Mammary epithelial cell (primary cell): ENCODE measurements at regions of chr12 and their contacts with region 1.

Region 1: DNA sequence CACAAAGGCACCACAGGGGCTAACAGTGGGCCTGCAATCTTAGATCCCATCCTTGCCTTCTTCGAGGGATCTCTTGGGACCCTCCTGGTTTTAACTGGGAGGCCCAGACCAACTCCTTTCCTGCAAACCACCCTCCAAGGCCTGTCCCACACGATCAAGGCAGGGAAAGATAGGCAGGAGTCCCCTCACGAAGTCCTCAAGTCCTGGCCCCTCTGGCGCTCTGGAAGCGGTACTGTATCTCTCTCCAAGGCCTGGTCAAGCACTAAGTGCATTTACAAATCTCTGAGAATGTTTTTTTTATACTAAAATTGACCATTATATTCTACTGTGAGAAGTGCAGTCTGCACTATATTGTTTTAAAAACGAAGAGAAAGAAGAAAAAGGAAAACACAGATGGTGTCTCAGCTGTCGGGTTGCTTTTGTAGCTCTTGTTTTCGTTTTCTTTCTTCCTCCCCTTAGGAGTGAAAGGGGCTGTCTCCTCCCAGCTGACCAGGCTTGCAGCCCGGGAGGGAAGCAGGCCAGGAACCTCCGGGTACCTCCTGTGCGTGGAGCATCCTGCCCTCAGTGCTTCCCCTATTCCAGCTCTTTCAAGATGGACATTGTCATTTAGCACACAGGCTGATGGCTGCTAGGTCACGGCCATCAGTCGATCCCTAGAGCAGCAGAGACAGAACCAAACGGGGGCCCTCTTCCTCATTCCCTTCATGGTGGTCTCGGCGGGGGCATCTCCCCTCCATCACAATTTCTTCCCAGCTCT is 56.7 kb downstream of the FAM222A start:
- DNase-seq: no peak
- H3K4me3 ChIP-seq: no peak overlapping the region
- H3K27ac ChIP-seq: no peak overlapping the region
- H3K4me1 ChIP-seq: peaks cover 16% of the 10 kb centered on the region
- H3K27me3 ChIP-seq: no peaks in the 10 kb centered on the region
- CTCF ChIP-seq: no peak

Region 2: DNA sequence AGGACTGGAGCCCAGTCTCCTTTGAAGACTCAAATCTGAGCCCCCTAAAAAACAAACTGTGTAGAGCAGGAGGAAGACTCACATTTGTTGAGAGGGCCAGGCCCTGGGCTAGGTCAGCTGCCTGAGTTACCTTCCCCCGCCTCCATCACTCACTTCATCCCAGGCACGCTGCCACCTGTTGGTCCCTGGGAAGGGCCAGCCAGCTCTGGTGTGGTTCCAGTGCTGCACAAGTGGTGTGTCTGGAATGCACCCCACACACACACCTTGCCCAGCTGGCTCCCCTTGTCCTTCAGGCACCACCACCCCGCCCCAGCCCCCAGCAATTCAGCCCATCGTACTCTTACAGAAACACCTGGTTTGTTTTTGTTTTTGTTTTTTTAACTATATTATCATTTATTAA is 187.6 kb before region 1 on chr12:
- CTCF ChIA-PET with region 1: no interaction called
- dilution Hi-C with region 1: no loop called
- in situ Hi-C with region 1: no loop called
- intact Hi-C with region 1: loop called (anchors 1 kb)
- DNase-seq: peak; percentile 51
- H3K4me3 ChIP-seq: no peak overlapping the region
- H3K27ac ChIP-seq: peak overlapping the region; percentile 81
- H3K4me1 ChIP-seq: peaks cover 22% of the 10 kb centered on the region
- H3K27me3 ChIP-seq: no peaks in the 10 kb centered on the region
- CTCF ChIP-seq: peak in 1 of 2 donors; percentile 34

Region 3: DNA sequence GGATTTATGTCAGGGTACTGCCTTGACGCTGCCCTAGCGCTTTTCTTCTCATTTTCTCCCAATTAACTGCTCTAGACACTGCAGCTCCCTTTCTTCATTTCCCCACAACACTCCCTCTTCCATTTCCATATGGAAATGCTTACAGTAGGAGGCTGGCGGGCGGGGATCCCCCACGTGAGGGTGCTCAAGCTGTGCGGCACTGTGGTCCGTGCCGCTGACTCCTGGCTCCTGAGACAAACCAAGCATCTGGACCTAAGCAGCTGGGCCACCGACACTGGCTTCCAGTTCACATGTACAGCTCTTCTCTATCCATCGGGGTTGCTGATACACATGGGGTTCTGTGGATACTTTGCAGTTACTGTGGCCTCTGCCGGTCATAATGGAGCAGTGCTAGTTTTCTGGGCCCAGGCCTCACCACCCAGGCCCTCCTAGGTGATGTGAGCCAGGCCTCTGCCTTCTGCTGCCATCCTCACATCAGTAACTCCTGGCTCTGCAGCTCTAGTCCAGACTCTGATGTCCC is 150.0 kb after region 1 on chr12:
- CTCF ChIA-PET with region 1: no interaction called
- dilution Hi-C with region 1: no loop called
- in situ Hi-C with region 1: no loop called
- intact Hi-C with region 1: no loop called
- DNase-seq: no peak
- H3K4me3 ChIP-seq: no peak overlapping the region
- H3K27ac ChIP-seq: no peak overlapping the region
- H3K4me1 ChIP-seq: no peaks in the 10 kb centered on the region
- H3K27me3 ChIP-seq: no peaks in the 10 kb centered on the region
- CTCF ChIP-seq: no peak

Region 4: GRCh38 chr12:110516995-110517394 is 746.7 kb after region 1 on chr12:
- CTCF ChIA-PET with region 1: no interaction called
- dilution Hi-C with region 1: no loop called
- in situ Hi-C with region 1: no loop called
- intact Hi-C with region 1: no loop called
- DNase-seq: no peak
- H3K4me3 ChIP-seq: no peak overlapping the region
- H3K27ac ChIP-seq: no peak overlapping the region
- H3K4me1 ChIP-seq: no peaks in the 10 kb centered on the region
- H3K27me3 ChIP-seq: no peaks in the 10 kb centered on the region
- CTCF ChIP-seq: no peak